ENCODE measurements at regions of chr4 and their contacts with region 1.

Region 1: GRCh38 chr4:149072384-149072783 is 630.2 kb upstream of the NR3C2 start:
- DNase-seq: no peak
- H3K4me3 ChIP-seq: no peak overlapping the region
- H3K27ac ChIP-seq: no peak overlapping the region
- H3K4me1 ChIP-seq: no peaks in the 10 kb centered on the region
- H3K27me3 ChIP-seq: no peaks in the 10 kb centered on the region
- CTCF ChIP-seq: no peak

Region 2: GRCh38 chr4:148944136-148944838 is 128.1 kb before region 1 on chr4:
- intact Hi-C with region 1: loop called (anchors 5 kb)
- DNase-seq: no peak
- H3K4me3 ChIP-seq: no peak overlapping the region
- H3K27ac ChIP-seq: no peak overlapping the region
- H3K4me1 ChIP-seq: no peaks in the 10 kb centered on the region
- H3K27me3 ChIP-seq: no peaks in the 10 kb centered on the region
- CTCF ChIP-seq: no peak

Region 3: DNA sequence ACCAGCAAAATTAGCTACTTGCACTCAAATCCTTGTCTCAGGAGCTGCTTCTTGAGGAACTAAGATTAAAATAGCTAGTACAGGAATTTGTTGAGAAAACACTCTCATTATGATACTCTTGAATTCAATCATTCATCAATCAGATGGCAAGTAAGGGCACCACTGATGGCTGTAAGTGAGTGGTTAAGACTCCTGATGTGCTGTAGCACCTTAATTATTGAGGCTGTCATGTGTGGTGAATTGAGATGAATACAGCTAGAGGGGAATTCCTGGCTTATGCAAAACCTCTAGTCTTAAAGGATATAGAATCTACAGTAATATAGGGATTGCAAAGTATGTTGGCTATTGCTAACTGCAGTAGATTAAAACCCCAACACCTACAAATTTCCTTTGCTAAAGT is 234.2 kb after region 1 on chr4:
- intact Hi-C with region 1: no loop called
- DNase-seq: no peak
- H3K4me3 ChIP-seq: no peak overlapping the region
- H3K27ac ChIP-seq: no peak overlapping the region
- H3K4me1 ChIP-seq: no peaks in the 10 kb centered on the region
- H3K27me3 ChIP-seq: no peaks in the 10 kb centered on the region
- CTCF ChIP-seq: no peak